ENCODE measurements at regions of chr7 and their contacts with region 1.

Region 1: GRCh38 chr7:156969972-156970420 is 20.5 kb downstream of the NOM1 start:
- DNase-seq: peak; percentile 40
- H3K4me3 Mint-ChIP-seq: no peak overlapping the region
- H3K27ac Mint-ChIP-seq: peak overlapping the region; percentile 49
- H3K4me1 Mint-ChIP-seq: peaks cover 8% of the 10 kb centered on the region
- H3K27me3 Mint-ChIP-seq: no peaks in the 10 kb centered on the region
- CTCF ChIP-seq: peak; percentile 42

Region 2: GRCh38 chr7:156949541-156950380 is 20.2 kb before region 1 on chr7 and contains the start of gene NOM1:
- CTCF ChIA-PET with region 1: interaction called, 7 read pairs
- POLR2A ChIA-PET with region 1: interaction called, 16 read pairs
- intact Hi-C with region 1: no loop called
- DNase-seq: peak; percentile 86
- H3K4me3 Mint-ChIP-seq: peak within 1 kb of the TSS; percentile 90
- H3K27ac Mint-ChIP-seq: peak within 1 kb of the TSS; percentile 65
- H3K4me1 Mint-ChIP-seq: peaks cover 11% of the 10 kb centered on the region
- H3K27me3 Mint-ChIP-seq: no peaks in the 10 kb centered on the region
- CTCF ChIP-seq: peak; percentile 90
- total RNA-seq, gene NOM1: 25.9 and 34.1 TPM in 2 replicates

Region 3: GRCh38 chr7:157138424-157139110 is 168.6 kb after region 1 on chr7 and contains the start of gene UBE3C:
- CTCF ChIA-PET with region 1: interaction called, 12 read pairs
- POLR2A ChIA-PET with region 1: interaction called, 5 read pairs
- intact Hi-C with region 1: loop called (anchors 2 kb)
- DNase-seq: peak; percentile 86
- H3K4me3 Mint-ChIP-seq: peak within 1 kb of the TSS; percentile 82
- H3K27ac Mint-ChIP-seq: peak within 1 kb of the TSS; percentile 80
- H3K4me1 Mint-ChIP-seq: peaks cover 29% of the 10 kb centered on the region
- H3K27me3 Mint-ChIP-seq: no peaks in the 10 kb centered on the region
- CTCF ChIP-seq: no peak
- total RNA-seq, gene UBE3C: 61.9 and 72.8 TPM in 2 replicates

Region 4: GRCh38 chr7:157228864-157229422 is 258.9 kb after region 1 on chr7:
- CTCF ChIA-PET with region 1: interaction called, 7 read pairs
- POLR2A ChIA-PET with region 1: no interaction called
- intact Hi-C with region 1: loop called (anchors 10 kb)
- DNase-seq: peak; percentile 42
- H3K4me3 Mint-ChIP-seq: no peak overlapping the region
- H3K27ac Mint-ChIP-seq: no peak overlapping the region
- H3K4me1 Mint-ChIP-seq: peaks cover 5% of the 10 kb centered on the region
- H3K27me3 Mint-ChIP-seq: no peaks in the 10 kb centered on the region
- CTCF ChIP-seq: no peak

Region 5: GRCh38 chr7:157250605-157251228 is 280.7 kb after region 1 on chr7:
- CTCF ChIA-PET with region 1: interaction called, 17 read pairs
- POLR2A ChIA-PET with region 1: interaction called, 3 read pairs
- intact Hi-C with region 1: no loop called
- DNase-seq: peak; percentile 71
- H3K4me3 Mint-ChIP-seq: no peak overlapping the region
- H3K27ac Mint-ChIP-seq: no peak overlapping the region
- H3K4me1 Mint-ChIP-seq: no peaks in the 10 kb centered on the region
- H3K27me3 Mint-ChIP-seq: no peaks in the 10 kb centered on the region
- CTCF ChIP-seq: peak; percentile 68

Region 6: DNA sequence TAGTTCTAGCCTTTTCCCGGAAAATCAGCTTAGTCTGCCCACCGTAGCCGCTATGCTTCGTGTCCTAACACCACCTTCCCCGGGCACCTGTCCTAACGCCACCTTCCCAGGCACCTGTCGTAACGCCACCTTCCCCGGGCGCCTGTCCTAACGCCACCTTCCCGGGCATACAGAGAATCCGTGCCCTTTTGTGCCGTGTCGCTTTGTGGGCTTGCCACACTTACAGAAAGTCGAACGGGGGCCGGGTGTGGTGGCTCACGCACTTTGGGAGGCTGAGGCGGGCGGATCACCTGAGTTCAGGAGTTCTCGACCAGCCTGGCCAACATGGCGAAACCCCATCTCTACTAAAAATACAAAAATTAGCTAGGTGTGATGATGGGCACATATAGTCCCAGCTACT is 293.2 kb after region 1 on chr7:
- CTCF ChIA-PET with region 1: no interaction called
- POLR2A ChIA-PET with region 1: no interaction called
- intact Hi-C with region 1: no loop called
- DNase-seq: no peak
- H3K4me3 Mint-ChIP-seq: no peak overlapping the region
- H3K27ac Mint-ChIP-seq: no peak overlapping the region
- H3K4me1 Mint-ChIP-seq: no peaks in the 10 kb centered on the region
- H3K27me3 Mint-ChIP-seq: no peaks in the 10 kb centered on the region
- CTCF ChIP-seq: no peak

Region 7: DNA sequence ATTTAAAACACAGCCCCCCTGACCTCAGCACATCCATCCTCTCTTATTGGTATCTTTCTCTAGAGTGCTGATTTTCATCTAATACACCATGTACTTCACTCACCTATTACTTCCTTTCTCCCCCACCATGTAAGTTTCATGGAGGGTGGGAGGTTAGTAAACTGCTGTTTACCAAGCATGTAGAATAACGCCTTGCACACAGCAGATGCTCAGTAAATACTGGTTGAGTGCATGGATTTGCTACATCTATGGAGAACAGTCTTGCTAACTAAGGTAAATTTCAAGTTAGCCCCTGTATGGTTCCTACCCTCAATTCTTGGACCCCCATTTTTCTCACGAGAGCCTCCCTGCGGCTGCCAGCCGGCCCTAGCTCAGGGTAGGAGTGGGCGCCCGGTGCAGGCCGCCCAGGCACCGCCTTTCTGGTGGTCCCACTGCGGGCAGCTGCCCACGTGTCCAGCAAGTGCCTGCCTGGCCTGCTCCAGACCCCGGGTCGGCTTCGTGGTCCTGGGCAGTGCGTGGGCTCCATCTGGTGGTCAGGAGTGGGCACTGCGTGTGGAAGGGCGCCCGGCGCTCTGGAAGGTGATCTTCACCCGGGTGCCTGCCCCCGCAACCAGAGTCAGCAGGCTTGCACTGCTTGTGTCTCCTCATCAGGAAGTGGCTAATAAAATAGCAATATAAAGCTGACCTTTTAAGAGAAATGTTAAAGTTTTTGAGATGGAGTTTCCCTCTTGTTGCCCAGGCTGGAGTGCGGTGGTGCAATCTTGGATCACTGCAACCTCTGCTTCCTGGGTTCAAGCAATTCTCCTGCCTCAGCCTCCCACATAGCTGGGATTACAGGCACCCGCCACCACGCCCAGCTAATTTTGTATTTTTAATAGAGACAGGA is 303.5 kb after region 1 on chr7:
- CTCF ChIA-PET with region 1: interaction called, 14 read pairs
- POLR2A ChIA-PET with region 1: interaction called, 3 read pairs
- intact Hi-C with region 1: no loop called
- DNase-seq: peak; percentile 67
- H3K4me3 Mint-ChIP-seq: peak overlapping the region; percentile 10
- H3K27ac Mint-ChIP-seq: peak overlapping the region; percentile 86
- H3K4me1 Mint-ChIP-seq: peaks cover 23% of the 10 kb centered on the region
- H3K27me3 Mint-ChIP-seq: no peaks in the 10 kb centered on the region
- CTCF ChIP-seq: peak; percentile 95

Region 8: DNA sequence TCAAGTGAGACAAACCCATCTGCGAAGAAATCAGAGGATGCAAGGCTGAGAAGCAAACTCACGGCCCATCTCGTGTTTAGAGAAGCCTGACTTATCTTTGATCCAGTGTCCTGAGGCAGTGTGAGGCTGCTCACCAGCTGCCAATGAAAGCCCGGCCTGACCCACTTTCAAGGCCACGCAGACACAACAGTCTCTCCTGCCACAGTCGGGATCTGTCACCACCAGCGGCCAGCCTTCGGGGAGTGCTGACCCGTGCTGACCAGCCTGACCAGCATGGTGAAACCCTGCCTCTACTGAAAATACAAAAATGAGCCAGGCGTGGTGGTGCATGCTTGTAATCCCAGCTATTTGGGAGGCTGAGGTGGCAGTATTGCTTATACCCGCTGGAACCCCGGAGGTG is 359.5 kb after region 1 on chr7:
- CTCF ChIA-PET with region 1: no interaction called
- POLR2A ChIA-PET with region 1: no interaction called
- intact Hi-C with region 1: no loop called
- DNase-seq: no peak
- H3K4me3 Mint-ChIP-seq: no peak overlapping the region
- H3K27ac Mint-ChIP-seq: no peak overlapping the region
- H3K4me1 Mint-ChIP-seq: no peaks in the 10 kb centered on the region
- H3K27me3 Mint-ChIP-seq: no peaks in the 10 kb centered on the region
- CTCF ChIP-seq: no peak

Region 9: GRCh38 chr7:157386979-157387800 is 417.2 kb after region 1 on chr7:
- CTCF ChIA-PET with region 1: no interaction called
- POLR2A ChIA-PET with region 1: no interaction called
- intact Hi-C with region 1: loop called (anchors 5 kb)
- DNase-seq: peak; percentile 86
- H3K4me3 Mint-ChIP-seq: no peak overlapping the region
- H3K27ac Mint-ChIP-seq: peak overlapping the region; percentile 16
- H3K4me1 Mint-ChIP-seq: peaks cover 8% of the 10 kb centered on the region
- H3K27me3 Mint-ChIP-seq: no peaks in the 10 kb centered on the region
- CTCF ChIP-seq: peak; percentile 86

Region 10: DNA sequence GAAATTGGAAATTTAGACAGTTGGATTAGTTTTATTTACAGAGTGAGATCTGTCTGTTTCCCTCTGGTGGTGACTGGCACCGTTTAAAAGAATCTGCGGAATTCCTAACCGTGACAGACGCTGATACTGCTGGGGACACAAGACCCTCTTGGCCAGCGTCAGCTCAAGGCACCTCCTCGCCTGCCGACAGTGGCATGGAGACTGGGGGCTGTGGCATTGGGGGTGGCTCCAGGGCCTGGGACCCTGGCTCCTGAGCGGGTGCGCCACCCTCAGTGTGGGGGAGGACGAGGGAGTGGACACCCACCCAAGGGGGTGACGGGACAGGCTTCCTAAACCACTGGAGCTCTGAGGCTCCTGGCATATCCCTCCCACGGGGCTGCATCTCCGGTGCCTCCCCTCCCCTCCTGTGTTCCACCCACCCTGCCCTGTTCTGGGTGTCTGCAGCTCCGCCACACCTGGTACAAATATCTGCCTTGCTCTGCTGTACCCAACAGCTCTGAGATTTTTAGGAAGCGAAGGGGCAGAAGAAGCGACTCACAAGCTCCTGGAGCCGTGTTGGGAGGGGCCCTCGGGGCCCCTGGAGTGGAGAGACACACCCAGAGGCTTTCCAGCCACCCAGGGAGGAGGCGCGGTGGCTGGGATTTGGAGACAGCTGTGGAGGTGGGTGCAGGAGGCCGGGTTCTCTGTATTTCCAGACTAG is 545.5 kb after region 1 on chr7:
- CTCF ChIA-PET with region 1: no interaction called
- POLR2A ChIA-PET with region 1: no interaction called
- intact Hi-C with region 1: no loop called
- DNase-seq: no peak
- H3K4me3 Mint-ChIP-seq: no peak overlapping the region
- H3K27ac Mint-ChIP-seq: no peak overlapping the region
- H3K4me1 Mint-ChIP-seq: no peaks in the 10 kb centered on the region
- H3K27me3 Mint-ChIP-seq: peaks cover 1% of the 10 kb centered on the region
- CTCF ChIP-seq: no peak

Measured in MCF 10A (cell line).